Sciatic nerve (tissue), 2 donors: ENCODE measurements at regions of chr4 and their contacts with region 1.

Region 1: GRCh38 chr4:57043347-57044251 is 64.9 kb downstream of the POLR2B start:
- DNase-seq: no peak
- ATAC-seq: peak; percentile 93

Region 2: GRCh38 chr4:55906999-55907398 is 1136.6 kb before region 1 on chr4:
- intact Hi-C with region 1: no loop called
- DNase-seq: no peak
- ATAC-seq: no peak

Region 3: GRCh38 chr4:56907489-56908205 is 136.0 kb before region 1 on chr4 and contains the start of gene REST:
- intact Hi-C with region 1: loop called (anchors 2 kb)
- DNase-seq: peak; percentile 87
- ATAC-seq: peak; percentile 92
- total RNA-seq, gene REST: 41.7 TPM

Region 4: DNA sequence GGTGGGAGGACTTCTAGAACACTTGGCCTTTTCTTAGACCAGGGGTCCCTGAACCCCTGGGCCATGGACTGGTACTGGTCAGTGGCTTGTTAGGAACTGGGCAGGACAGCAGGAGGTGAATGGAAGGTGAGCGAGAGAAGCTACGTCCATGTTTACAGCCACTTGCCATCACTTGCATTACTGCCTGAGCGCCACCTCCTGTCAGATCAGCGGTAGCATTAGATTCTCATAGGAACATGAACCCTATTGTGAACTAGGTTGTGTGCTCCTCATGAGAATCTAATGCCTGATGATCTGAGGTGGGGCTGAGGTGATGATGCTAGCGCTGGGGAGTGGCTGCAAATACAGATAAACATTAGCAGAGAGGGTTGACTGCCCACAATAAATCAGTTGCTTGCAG is 167.5 kb after region 1 on chr4:
- intact Hi-C with region 1: no loop called
- DNase-seq: no peak
- ATAC-seq: no peak